Endothelial cell of umbilical vein (primary cell): ENCODE measurements at regions of chr5 and their contacts with region 1.

Region 1: DNA sequence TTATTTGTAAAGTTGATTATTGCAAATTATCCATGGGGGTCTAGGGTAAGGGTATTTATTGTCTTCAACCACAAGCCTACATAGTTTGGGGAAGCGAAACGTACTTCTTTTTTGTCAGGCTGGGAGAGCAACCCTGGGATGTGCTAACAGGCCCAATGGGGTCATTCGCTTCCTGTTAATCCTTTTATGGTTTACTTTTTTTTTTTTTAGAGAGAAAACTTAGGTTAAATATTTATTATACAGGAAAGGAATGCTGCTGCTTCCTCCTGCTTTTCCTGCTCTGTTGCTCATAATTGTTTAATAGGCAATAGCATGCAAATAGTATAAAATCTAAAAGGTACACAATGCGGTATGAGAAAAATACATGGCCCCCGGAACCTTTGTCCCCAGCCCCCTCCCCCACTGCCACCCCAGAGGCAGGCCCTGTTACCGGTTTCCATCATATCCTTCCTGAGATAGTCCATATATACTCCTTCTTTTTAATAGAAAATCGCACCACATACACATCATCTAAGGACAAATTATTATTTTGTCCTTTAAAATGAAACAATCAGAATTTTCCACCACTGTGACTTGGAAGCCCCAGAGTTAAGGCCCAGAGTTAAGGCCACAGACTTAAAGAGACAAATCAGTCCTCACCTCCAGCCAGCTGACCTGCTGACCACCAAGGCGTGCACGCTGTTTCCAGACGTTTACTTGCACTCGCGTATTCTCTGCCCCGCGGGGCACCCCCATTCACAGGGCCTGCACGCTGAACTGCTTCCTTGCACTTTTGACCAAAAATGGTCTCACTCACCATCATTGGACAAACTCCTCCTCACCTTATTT is 83.9 kb downstream of the NDFIP1 start:
- DNase-seq: peak; percentile 41
- H3K4me3 ChIP-seq: no peak overlapping the region
- H3K27ac ChIP-seq: peak overlapping the region; percentile 75
- H3K4me1 ChIP-seq: peaks cover 29% of the 10 kb centered on the region
- H3K27me3 ChIP-seq: no peaks in the 10 kb centered on the region
- CTCF ChIP-seq: no peak
- POLR2A ChIP-seq: no peak

Region 2: GRCh38 chr5:142209045-142209312 is 16.5 kb after region 1 on chr5:
- CTCF ChIA-PET with region 1: no interaction called
- POLR2A ChIA-PET with region 1: no interaction called
- dilution Hi-C with region 1: no loop called
- intact Hi-C with region 1: no loop called
- DNase-seq: no peak
- H3K4me3 ChIP-seq: no peak overlapping the region
- H3K27ac ChIP-seq: no peak overlapping the region
- H3K4me1 ChIP-seq: no peaks in the 10 kb centered on the region
- H3K27me3 ChIP-seq: no peaks in the 10 kb centered on the region
- CTCF ChIP-seq: no peak
- POLR2A ChIP-seq: no peak

Region 3: GRCh38 chr5:142356716-142357473 is 164.4 kb after region 1 on chr5:
- CTCF ChIA-PET with region 1: no interaction called
- POLR2A ChIA-PET with region 1: no interaction called
- dilution Hi-C with region 1: no loop called
- intact Hi-C with region 1: loop called (anchors 2 kb)
- DNase-seq: peak; percentile 94
- H3K4me3 ChIP-seq: peak overlapping the region in 1 of 3 experiments; percentile 54
- H3K27ac ChIP-seq: peak overlapping the region; percentile 74
- H3K4me1 ChIP-seq: peaks cover 31% of the 10 kb centered on the region
- H3K27me3 ChIP-seq: no peaks in the 10 kb centered on the region
- CTCF ChIP-seq: no peak
- POLR2A ChIP-seq: peak; percentile 47